ENCODE measurements at regions of chr1 and their contacts with region 1.

Region 1: DNA sequence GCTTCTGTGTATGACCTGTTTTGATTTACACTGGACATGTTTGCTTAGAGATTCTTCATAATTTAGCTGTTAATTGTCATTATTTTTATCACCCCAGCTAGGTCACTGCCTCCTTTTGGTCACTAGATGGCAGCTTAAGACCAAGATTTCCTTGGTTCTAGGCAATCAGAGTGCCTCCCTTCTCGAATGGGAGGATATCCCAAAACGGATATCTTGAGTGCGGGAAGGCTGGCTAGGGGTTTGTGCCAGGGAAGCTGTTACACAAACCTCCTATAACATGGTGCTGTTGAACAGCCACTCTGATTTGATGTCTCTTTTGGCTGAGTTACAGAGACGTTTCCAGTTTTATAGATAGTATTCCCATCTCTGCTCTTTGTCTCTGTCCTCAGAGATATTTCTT is 283.5 kb downstream of the S1PR1 start:
- DNase-seq: peak; percentile 42
- H3K4me3 ChIP-seq: no peak overlapping the region
- H3K27ac ChIP-seq: no peak overlapping the region
- H3K4me1 ChIP-seq: no peaks in the 10 kb centered on the region
- H3K27me3 ChIP-seq: no peaks in the 10 kb centered on the region
- CTCF ChIP-seq: peak; percentile 79 to 89

Region 2: GRCh38 chr1:101567582-101568189 is 47.4 kb after region 1 on chr1:
- CTCF ChIA-PET with region 1: no interaction called
- dilution Hi-C with region 1: no loop called
- in situ Hi-C with region 1: no loop called
- intact Hi-C with region 1: loop called (anchors 1 kb)
- DNase-seq: peak; percentile 20
- H3K4me3 ChIP-seq: no peak overlapping the region
- H3K27ac ChIP-seq: no peak overlapping the region
- H3K4me1 ChIP-seq: no peaks in the 10 kb centered on the region
- H3K27me3 ChIP-seq: peaks cover 2% of the 10 kb centered on the region
- CTCF ChIP-seq: peak; percentile 94 to 96

Region 3: DNA sequence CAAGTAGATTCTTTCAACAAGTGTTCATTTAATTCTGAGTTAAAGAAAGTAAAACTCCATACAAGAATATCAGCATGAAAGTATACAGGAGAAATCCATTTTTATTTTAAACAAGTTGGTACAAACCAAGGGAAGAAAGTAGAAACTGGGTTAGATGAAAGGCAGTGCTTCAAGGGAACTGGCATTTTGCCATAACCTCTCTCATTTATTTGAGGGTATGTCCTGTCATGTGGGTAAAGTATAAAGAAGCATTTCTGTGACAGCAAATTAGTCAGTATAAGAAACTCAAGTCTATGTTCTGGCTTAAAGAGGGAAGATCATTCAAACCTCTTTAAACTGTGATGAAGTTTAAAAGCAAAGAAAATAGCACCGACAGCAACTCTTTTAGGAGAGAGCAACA is 444.4 kb after region 1 on chr1:
- CTCF ChIA-PET with region 1: no interaction called
- dilution Hi-C with region 1: no loop called
- in situ Hi-C with region 1: no loop called
- intact Hi-C with region 1: loop called (anchors 10 kb)
- DNase-seq: no peak
- H3K4me3 ChIP-seq: no peak overlapping the region
- H3K27ac ChIP-seq: no peak overlapping the region
- H3K4me1 ChIP-seq: no peaks in the 10 kb centered on the region
- H3K27me3 ChIP-seq: peaks cover 3% of the 10 kb centered on the region
- CTCF ChIP-seq: no peak

Region 4: DNA sequence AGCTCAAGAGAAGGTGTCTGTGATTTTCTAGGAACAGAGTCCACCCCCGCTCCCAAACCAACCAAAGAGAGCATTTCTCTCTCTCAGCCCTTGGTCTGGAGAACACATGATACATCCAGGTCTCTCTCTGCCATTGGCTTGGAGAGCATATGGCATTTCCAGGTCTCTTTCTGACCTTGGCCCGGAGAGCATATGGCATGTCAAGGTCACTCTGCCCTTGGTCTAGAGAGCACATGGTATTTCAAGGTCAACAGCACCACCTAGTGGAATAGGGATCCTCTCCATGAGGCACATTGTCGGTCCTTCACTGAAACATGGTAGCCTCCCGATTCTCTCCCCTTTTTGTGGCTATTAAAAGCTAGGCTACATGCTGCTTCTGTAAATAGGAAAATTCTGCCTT is 914.1 kb after region 1 on chr1:
- CTCF ChIA-PET with region 1: no interaction called
- dilution Hi-C with region 1: no loop called
- in situ Hi-C with region 1: no loop called
- intact Hi-C with region 1: loop called (anchors 2 kb)
- DNase-seq: peak; percentile 4
- H3K4me3 ChIP-seq: no peak overlapping the region
- H3K27ac ChIP-seq: no peak overlapping the region
- H3K4me1 ChIP-seq: no peaks in the 10 kb centered on the region
- H3K27me3 ChIP-seq: no peaks in the 10 kb centered on the region
- CTCF ChIP-seq: peak; percentile 40 to 50

Measured in mammary epithelial cell (primary cell).